Endothelial cell of umbilical vein (primary cell): ENCODE measurements at regions of chr3 and their contacts with region 1.

Region 1: DNA sequence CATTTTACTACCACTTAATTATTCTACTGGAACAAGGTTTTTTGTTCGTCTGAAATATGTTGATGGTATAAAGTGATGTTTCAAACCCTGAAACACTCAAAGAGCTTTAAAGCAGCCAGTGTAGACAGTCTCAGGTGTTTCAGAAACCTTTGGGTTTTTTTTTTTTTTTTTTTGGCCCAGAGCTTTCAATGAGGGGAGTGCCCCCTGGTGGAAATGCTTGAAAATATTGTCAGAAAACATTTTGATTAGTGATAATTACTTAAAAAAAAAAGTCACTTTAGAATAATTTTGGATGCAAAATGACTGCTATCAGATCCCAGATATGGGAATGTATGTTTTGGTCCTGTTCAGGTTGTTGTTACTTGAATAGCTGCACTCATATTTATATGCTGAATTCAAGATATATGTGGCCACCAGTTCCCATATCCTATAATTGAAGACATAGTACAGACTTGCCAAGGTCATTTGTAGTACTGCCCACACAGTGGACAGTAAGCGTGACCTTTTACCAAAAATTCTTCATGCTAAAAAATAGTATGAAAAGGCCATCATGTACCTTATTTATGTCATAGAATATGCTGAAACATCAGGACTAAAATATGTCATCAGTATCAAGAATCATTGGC is 35.9 kb downstream of the SATB1 start:
- DNase-seq: peak; percentile 33
- H3K4me3 ChIP-seq: no peak overlapping the region
- H3K27ac ChIP-seq: no peak overlapping the region
- H3K4me1 ChIP-seq: no peaks in the 10 kb centered on the region
- H3K27me3 ChIP-seq: no peaks in the 10 kb centered on the region
- CTCF ChIP-seq: peak; percentile 33 to 45
- POLR2A ChIP-seq: no peak

Region 2: DNA sequence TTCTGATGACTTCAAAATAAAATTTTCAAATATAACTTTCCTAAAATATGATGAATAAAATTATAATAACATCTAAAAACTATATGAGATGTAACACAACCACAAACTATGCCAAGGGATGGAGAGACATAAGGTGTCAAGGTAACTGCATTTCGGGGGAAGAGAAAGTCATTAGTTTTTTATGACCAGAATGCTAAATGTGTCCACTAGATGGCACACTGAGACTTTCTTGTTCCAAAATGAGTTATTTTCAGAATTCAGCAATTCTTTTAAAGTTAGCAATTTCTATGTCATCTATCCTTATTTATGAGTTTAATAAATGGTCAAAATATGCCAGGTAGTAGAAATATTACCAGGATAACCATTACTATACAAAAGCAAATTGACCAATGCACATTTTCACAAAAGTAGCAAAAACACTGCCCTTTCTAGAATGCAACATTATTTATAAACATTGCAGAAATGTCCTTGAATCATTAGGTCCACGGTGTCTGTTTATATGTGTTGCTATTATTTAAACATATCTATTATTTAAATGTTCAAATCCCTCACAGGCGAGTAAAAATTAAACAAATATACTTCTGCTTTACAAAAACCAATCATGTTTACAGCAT is 1130.3 kb before region 1 on chr3:
- CTCF ChIA-PET with region 1: interaction called, 3 read pairs
- POLR2A ChIA-PET with region 1: no interaction called
- dilution Hi-C with region 1: no loop called
- intact Hi-C with region 1: loop called (anchors 5 kb)
- DNase-seq: peak; percentile 51
- H3K4me3 ChIP-seq: no peak overlapping the region
- H3K27ac ChIP-seq: no peak overlapping the region
- H3K4me1 ChIP-seq: no peaks in the 10 kb centered on the region
- H3K27me3 ChIP-seq: no peaks in the 10 kb centered on the region
- CTCF ChIP-seq: peak; percentile 55
- POLR2A ChIP-seq: no peak

Region 3: GRCh38 chr3:18369551-18370185 is 19.6 kb before region 1 on chr3:
- CTCF ChIA-PET with region 1: no interaction called
- POLR2A ChIA-PET with region 1: no interaction called
- dilution Hi-C with region 1: no loop called
- intact Hi-C with region 1: no loop called
- DNase-seq: no peak
- H3K4me3 ChIP-seq: no peak overlapping the region
- H3K27ac ChIP-seq: no peak overlapping the region
- H3K4me1 ChIP-seq: no peaks in the 10 kb centered on the region
- H3K27me3 ChIP-seq: no peaks in the 10 kb centered on the region
- CTCF ChIP-seq: no peak
- POLR2A ChIP-seq: no peak

Region 4: DNA sequence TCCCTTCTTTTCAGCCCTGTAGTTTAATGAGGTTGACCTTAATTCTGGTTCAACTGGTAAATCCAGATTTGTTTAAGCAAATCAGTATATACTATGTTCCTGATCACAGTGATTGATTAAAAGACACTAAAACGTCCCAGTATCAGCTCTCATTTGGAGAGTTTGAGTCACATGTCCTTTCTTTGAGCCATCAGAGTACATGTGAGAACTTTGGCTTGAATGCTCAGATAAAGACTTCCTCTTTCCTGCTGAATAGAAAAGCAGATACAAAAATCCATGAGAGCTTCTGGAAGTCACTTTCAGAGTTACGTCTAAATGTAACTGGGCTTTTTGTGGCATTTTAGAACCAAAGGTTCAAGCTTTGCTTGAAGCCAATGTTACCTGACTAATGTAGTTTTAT is 377.8 kb after region 1 on chr3:
- CTCF ChIA-PET with region 1: no interaction called
- POLR2A ChIA-PET with region 1: no interaction called
- dilution Hi-C with region 1: no loop called
- intact Hi-C with region 1: no loop called
- DNase-seq: no peak
- H3K4me3 ChIP-seq: no peak overlapping the region
- H3K27ac ChIP-seq: no peak overlapping the region
- H3K4me1 ChIP-seq: no peaks in the 10 kb centered on the region
- H3K27me3 ChIP-seq: no peaks in the 10 kb centered on the region
- CTCF ChIP-seq: no peak
- POLR2A ChIP-seq: no peak